ENCODE measurements at regions of chr11 and their contacts with region 1.

Region 1: DNA sequence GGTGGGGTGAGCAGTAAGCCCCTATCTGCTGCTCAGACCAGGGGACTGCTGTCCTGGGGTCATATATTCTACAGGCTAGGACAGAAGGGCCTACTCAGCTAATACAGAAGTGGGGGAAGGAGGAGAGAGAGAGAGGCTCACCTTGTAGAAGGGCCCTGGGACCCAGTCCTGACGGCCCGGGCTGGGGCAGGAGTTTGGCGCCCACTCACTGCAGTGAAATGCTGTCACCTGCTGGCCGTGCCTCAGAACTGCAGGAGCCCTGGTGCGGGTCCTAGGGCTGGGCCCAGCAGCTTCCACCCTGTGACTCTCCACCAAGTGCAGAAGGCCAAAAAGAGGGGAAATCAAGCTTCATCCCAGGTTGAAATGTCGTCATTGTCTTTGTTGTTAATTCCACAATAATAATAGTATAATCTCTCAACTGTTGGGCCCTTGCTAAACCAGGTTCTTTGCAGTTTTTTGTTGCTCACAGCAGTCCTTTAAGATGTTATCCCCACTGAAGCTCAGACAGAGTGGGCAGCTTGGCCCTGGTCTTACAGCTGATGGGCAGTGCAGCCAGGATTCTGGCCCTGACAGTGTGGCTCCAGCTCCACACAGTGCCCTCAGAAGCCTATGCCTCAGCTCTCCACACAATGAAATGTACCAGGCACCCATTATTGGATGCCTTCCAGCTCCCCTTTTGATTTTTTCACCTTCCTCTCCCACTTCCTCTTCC is 29.6 kb downstream of the TRIM29 start:
- DNase-seq: peak; percentile 37 to 90 (median 80)
- ATAC-seq: peak; percentile 80 to 99 (median 96)
- H3K4me3 ChIP-seq: no peak overlapping the region
- H3K27ac ChIP-seq: no peak overlapping the region
- H3K4me1 ChIP-seq: no peaks in the 10 kb centered on the region
- H3K27me3 ChIP-seq: no peaks in the 10 kb centered on the region
- CTCF ChIP-seq: peak; percentile 98 to 99 (median 99)

Region 2: GRCh38 chr11:119474682-119475596 is 633.4 kb before region 1 on chr11:
- intact Hi-C with region 1: loop called in 2 of 3 experiments (anchors 5 kb)
- DNase-seq: peak in 4 of 6 donors; percentile 31 to 69 (median 54)
- ATAC-seq: peak; percentile 48 to 92 (median 85)
- H3K4me3 ChIP-seq: no peak overlapping the region
- H3K27ac ChIP-seq: no peak overlapping the region
- H3K4me1 ChIP-seq: no peaks in the 10 kb centered on the region
- H3K27me3 ChIP-seq: no peaks in the 10 kb centered on the region
- CTCF ChIP-seq: peak; percentile 53 to 87 (median 76)

Region 3: DNA sequence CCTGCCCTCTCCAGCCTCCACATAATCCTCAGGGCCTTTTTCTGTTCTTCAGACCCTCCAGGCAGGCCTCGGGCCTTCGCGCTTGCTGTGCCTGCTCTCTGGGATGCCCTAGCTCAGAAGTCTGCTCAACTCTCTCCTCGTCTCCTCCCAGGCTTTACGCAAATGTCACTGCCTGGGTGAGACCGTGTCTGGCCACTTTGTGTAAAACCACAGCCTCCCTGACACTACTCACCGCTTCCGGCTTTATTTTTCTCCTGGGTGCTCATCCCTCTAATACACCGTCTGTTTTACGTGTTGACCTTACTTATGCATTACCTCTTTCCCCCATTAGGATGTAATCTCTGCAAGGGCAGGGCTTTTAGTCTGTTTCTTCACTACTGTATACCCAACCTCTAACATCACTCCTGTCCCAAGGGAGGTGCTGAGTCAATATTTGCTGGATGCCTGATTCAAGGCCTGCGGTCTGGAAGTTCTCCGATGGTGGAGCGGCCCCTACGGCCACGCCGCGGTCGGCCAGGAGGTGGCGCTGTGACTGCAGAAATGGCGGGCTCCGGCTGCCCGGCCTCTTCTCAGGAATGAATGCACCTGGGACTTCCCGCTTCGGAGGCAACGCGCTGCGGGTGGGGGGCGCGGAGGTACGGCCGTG is 627.2 kb before region 1 on chr11:
- intact Hi-C with region 1: loop called in 2 of 3 experiments (anchors 5 kb)
- DNase-seq: peak; percentile 79 to 99 (median 90)
- ATAC-seq: peak; percentile 94 to 98 (median 96)
- H3K4me3 ChIP-seq: no peak overlapping the region
- H3K27ac ChIP-seq: no peak overlapping the region
- H3K4me1 ChIP-seq: no peaks in the 10 kb centered on the region
- H3K27me3 ChIP-seq: no peaks in the 10 kb centered on the region
- CTCF ChIP-seq: peak; percentile 98 to 99 (median 99)

Region 4: DNA sequence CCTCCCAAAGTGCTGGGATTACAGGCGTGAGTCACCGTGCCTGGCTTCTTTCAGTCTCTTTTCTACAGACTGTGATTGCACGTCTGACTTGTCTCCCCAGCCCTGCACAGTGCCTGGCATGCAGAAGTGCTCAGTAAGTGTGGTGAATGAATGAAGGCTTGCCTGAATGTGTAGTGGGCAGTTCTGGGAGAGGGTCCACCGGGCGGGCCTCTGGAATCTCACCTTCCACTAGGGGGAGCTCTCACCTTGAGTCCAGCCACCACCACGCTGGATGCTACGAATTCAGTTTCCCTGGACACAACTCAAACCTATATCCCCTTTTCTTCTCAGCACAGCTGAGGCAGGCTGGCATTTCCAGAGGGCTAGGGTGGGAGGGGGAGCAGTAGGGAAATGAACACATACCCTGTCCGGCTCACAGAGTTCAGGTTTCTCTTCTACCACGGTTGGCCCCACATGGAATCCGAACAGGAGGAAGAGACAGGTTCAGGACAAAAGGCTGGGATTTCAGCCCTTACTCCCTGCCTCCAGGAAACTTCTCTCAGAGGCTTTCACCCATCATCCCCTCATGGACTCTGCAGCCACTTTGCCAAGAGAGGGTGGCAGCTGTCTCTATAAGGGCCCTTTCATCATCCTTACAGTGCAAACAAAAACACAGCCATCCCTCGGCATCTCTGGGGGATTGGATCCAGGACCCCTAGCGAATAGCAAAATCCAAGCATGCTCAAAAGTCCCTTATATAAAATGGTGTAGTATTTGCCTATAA is 466.1 kb before region 1 on chr11:
- intact Hi-C with region 1: loop called in 1 of 3 experiments (anchors 5 kb)
- DNase-seq: no peak
- ATAC-seq: peak in 3 of 4 donors; percentile 70 to 86 (median 75)
- H3K4me3 ChIP-seq: no peak overlapping the region
- H3K27ac ChIP-seq: no peak overlapping the region
- H3K4me1 ChIP-seq: no peaks in the 10 kb centered on the region
- H3K27me3 ChIP-seq: no peaks in the 10 kb centered on the region
- CTCF ChIP-seq: peak; percentile 19 to 34 (median 28)

Region 5: GRCh38 chr11:119666463-119667131 is 441.7 kb before region 1 on chr11:
- intact Hi-C with region 1: loop called in 1 of 3 experiments (anchors 5 kb)
- DNase-seq: peak; percentile 70 to 93 (median 86)
- ATAC-seq: peak; percentile 80 to 93 (median 86)
- H3K4me3 ChIP-seq: no peak overlapping the region
- H3K27ac ChIP-seq: no peak overlapping the region
- H3K4me1 ChIP-seq: peaks cover 0 to 8% (median 4%) of the 10 kb centered on the region in 3 donors
- H3K27me3 ChIP-seq: no peaks in the 10 kb centered on the region
- CTCF ChIP-seq: peak; percentile 86 to 94 (median 92)

Region 6: DNA sequence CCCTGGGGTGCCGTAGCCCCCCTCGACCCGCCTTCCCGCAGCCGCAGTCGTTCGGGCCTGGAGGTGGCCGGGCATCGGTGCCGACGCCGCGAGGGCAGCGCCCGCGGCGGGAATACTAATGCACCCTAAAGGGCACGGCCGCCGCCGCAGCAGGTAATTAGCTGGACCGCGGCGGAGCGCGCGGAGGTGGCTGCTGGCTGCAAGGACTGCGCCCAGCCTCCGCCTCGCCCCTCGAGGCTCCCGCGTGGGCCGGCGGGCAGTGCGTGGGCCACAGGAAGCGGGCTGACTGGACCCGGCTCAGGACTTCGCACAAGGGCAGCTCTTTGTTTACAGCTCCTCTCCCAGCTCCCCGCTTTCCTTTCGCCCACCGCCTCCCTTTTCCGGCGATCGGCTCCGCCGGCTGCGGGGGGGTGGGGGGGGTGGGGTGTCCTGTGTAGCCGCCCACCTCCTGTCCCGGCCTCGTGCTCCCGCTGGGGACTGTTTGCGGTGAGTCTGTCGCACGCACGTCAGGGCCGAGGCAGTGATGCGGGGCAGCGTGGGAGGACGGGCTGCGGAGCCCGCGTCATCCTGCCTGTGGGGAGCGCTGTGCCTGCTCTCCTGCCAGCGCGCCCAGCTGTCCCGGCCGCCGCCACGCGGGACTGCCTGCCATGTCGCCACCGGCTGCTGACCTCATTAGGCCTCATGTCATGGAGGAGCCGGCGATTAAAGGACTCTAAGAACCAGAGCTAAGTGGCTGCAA is 456.4 kb after region 1 on chr11:
- intact Hi-C with region 1: no loop called
- DNase-seq: peak in 3 of 6 donors; percentile 9 to 70 (median 21)
- ATAC-seq: peak; percentile 60 to 77 (median 74)
- H3K4me3 ChIP-seq: peak overlapping the region in 2 of 4 donors; percentile 29 to 43
- H3K27ac ChIP-seq: no peak overlapping the region
- H3K4me1 ChIP-seq: peaks cover 0 to 11% (median 6%) of the 10 kb centered on the region in 3 donors
- H3K27me3 ChIP-seq: peaks cover 0 to 11% (median 5%) of the 10 kb centered on the region in 4 donors
- CTCF ChIP-seq: no peak